GM10248 (cell line): ENCODE measurements at regions of chr11 and their contacts with region 1.

Region 1: GRCh38 chr11:134261626-134262488 is 8.5 kb downstream of the ACAD8 start:
- DNase-seq: peak; percentile 63
- CTCF ChIP-seq: peak; percentile 64

Region 2: DNA sequence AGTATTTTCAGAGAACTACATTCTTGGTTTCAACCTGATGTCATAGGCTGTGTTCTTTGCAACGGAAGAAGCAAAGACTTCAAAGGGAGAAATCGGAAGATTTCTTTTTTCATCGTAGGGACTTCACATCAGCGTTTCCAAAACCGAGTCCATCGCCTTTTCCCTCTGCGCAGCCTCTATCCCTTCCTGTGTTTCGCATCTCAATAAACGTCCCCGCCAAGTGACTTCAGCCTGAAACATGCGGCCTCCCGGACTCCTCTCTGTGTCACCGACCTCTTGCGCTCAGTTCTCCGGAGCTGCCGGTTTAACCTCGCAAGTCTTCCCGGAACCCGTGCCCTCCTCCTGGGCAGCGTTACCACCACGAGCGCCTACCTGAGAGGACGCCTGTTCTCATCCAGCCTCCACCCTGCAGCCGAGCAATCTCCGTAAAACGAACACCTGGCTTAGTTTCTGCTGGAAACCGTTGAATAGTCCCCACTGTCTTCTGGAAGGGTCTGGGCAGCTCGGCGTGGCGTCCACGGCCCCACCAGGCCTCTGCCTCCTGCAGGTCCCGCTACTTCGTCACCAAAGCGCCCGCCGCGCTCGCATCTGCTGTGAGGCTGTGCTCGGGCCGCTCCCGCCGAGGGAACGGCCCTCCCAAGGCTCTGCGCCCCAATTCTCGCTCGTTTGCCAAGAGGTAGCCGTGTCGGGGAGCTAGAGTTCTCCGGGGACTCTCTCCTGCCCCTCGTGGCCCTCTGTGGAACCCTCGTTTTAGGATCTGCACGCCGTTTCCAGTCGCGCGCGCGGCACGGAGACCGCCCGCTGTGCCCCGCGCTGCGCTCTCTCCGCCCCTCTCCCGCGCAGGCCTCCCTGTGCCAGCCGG is 13.9 kb after region 1 on chr11 and contains the start of gene GLB1L3:
- CTCF ChIA-PET with region 1: interaction called, 99 read pairs
- POLR2A ChIA-PET with region 1: no interaction called
- DNase-seq: peak; percentile 71
- CTCF ChIP-seq: peak; percentile 48